ENCODE measurements at regions of chr17 and their contacts with region 1.

Region 1: DNA sequence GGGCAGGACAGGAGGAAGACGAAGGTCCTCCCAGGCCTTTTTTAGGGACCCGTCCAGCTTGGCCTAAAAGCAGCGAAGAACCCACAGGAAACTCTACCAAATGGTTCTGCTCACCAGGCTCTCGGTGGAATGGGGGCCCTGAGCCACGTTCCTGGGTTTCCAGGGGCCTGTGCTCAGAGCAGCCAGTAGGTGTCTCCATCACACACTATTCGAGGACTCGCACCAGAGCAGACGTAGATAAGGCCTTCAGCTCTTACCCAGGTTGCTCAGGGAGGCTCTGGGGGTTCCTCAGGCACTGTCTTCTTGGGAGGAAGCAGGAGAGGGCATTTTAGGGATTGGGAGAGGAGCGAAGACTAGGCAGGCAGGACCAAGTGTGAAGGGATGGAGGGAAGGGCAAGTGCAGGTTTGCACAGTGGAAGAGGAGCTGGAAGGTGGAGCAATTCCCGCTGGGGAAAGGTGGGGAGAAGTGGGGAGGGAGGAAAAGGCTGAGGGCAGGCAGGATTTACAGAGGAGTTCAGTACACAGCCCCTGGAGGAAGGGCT is 157.1 kb downstream of the RGS9 start:
- DNase-seq: peak; percentile 61
- H3K4me3 ChIP-seq: no peak overlapping the region
- H3K27ac ChIP-seq: no peak overlapping the region
- H3K4me1 ChIP-seq: peaks cover 24% of the 10 kb centered on the region
- H3K27me3 ChIP-seq: peaks cover 3 to 4% of the 10 kb centered on the region in 2 experiments
- CTCF ChIP-seq: peak; percentile 84 to 86
- POLR2A ChIP-seq: no peak

Region 2: GRCh38 chr17:65055348-65056261 is 238.6 kb before region 1 on chr17:
- CTCF ChIA-PET with region 1: no interaction called
- POLR2A ChIA-PET with region 1: no interaction called
- dilution Hi-C with region 1: no loop called
- intact Hi-C with region 1: no loop called
- DNase-seq: peak; percentile 53
- H3K4me3 ChIP-seq: peak overlapping the region; percentile 34 to 78 (median 74)
- H3K27ac ChIP-seq: peak overlapping the region; percentile 2
- H3K4me1 ChIP-seq: peaks cover 11% of the 10 kb centered on the region
- H3K27me3 ChIP-seq: no peaks in the 10 kb centered on the region
- CTCF ChIP-seq: no peak
- POLR2A ChIP-seq: no peak

Region 3: GRCh38 chr17:65278050-65278819 is 16.0 kb before region 1 on chr17:
- CTCF ChIA-PET with region 1: interaction called, 14 read pairs
- POLR2A ChIA-PET with region 1: no interaction called
- dilution Hi-C with region 1: no loop called
- intact Hi-C with region 1: loop called (anchors 1 kb)
- DNase-seq: peak; percentile 58
- H3K4me3 ChIP-seq: no peak overlapping the region
- H3K27ac ChIP-seq: no peak overlapping the region
- H3K4me1 ChIP-seq: peaks cover 1% of the 10 kb centered on the region
- H3K27me3 ChIP-seq: no peaks in the 10 kb centered on the region
- CTCF ChIP-seq: peak; percentile 79 to 80
- POLR2A ChIP-seq: no peak

Region 4: GRCh38 chr17:65312718-65313374 is 18.6 kb after region 1 on chr17:
- CTCF ChIA-PET with region 1: interaction called, 22 read pairs
- POLR2A ChIA-PET with region 1: no interaction called
- dilution Hi-C with region 1: no loop called
- intact Hi-C with region 1: no loop called
- DNase-seq: no peak
- H3K4me3 ChIP-seq: no peak overlapping the region
- H3K27ac ChIP-seq: no peak overlapping the region
- H3K4me1 ChIP-seq: no peaks in the 10 kb centered on the region
- H3K27me3 ChIP-seq: peaks cover 6 to 30% of the 10 kb centered on the region in 2 experiments
- CTCF ChIP-seq: no peak
- POLR2A ChIP-seq: no peak

Region 5: DNA sequence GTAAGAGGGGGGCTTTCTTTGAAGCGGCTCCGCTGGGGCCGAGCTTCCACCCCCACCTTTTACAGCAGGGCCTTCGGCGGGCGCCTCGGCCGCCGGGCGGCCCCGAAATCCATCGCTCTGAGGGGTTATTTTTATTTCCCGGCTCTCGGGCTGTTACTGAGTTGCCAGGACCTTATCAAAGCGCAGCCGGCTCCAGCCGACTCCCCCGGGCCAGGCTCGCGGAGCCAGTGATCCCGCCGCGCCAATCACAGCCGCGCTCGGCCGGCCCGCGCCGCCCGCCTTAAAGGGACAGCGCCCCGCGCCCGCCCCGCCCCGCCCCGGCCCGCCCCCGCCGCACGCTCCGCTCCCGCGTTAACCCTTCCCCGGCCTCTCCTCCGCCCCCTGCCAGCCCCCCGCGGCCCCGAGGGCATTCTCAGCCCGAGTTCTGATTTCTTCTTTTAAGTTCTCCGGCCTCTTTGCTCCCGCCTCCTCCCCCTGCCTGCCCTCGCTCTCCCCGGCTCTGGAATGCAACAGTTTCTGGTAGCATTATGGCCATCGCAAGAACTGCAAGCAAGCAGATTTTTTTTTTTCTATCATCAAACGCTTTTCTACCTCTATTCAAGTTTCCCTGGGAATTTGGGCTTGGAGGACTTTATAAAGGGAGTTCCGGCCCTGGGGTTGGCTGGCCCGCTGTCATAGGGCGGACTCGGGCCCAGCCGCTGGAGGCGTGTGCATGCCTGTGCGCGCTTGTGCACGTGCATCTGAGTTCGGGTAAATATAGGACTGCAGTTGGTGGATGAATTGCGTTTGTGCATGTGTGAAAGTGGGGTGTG is 267.4 kb after region 1 on chr17 and contains the start of gene AXIN2:
- CTCF ChIA-PET with region 1: interaction called, 50 read pairs
- POLR2A ChIA-PET with region 1: no interaction called
- dilution Hi-C with region 1: no loop called
- intact Hi-C with region 1: loop called (anchors 1 kb)
- DNase-seq: peak; percentile 87
- H3K4me3 ChIP-seq: peak within 1 kb of the TSS; percentile 51 to 83 (median 71)
- H3K27ac ChIP-seq: peak within 1 kb of the TSS; percentile 73
- H3K4me1 ChIP-seq: peaks cover 12% of the 10 kb centered on the region
- H3K27me3 ChIP-seq: peaks cover 4 to 5% of the 10 kb centered on the region in 2 experiments
- CTCF ChIP-seq: peak in 1 of 2 donors; percentile 15
- POLR2A ChIP-seq: no peak
- total RNA-seq, gene AXIN2: 3.0 and 3.1 TPM in 2 replicates

Region 6: GRCh38 chr17:65914784-65915350 is 620.6 kb after region 1 on chr17:
- CTCF ChIA-PET with region 1: interaction called, 5 read pairs
- POLR2A ChIA-PET with region 1: no interaction called
- dilution Hi-C with region 1: no loop called
- intact Hi-C with region 1: loop called (anchors 5 kb)
- DNase-seq: peak; percentile 29
- H3K4me3 ChIP-seq: no peak overlapping the region
- H3K27ac ChIP-seq: no peak overlapping the region
- H3K4me1 ChIP-seq: peaks cover 17% of the 10 kb centered on the region
- H3K27me3 ChIP-seq: no peaks in the 10 kb centered on the region
- CTCF ChIP-seq: no peak
- POLR2A ChIP-seq: no peak

Region 7: DNA sequence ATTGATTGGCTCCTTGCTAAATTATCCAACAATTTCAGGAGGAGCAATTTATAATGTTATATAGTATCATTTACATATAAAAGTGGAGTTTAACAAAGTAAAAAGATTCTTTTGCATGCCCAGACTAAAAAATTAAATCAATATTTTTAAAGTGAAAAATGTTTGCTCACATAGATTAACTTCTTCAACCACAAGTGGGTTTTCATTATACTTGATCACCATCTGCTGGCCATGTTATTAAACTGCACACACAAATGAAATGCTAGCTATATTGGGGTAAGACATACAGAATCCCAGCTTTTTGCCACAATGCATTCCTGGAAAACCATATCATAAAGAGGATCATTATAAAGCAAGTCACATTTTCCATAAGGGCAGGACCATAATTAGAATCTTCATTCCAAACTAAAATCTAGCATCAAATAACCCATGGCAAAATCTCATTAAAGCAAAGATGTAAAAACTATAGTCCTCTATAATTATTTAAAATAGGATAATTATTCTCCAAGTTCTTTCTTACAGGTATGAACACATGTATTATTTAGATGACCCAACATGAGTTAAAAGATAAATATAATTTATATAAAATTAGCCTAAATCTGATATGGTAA is 871.4 kb after region 1 on chr17:
- CTCF ChIA-PET with region 1: interaction called, 119 read pairs
- POLR2A ChIA-PET with region 1: interaction called, 6 read pairs
- dilution Hi-C with region 1: no loop called
- intact Hi-C with region 1: loop called (anchors 1 kb)
- DNase-seq: peak; percentile 72
- H3K4me3 ChIP-seq: no peak overlapping the region
- H3K27ac ChIP-seq: no peak overlapping the region
- H3K4me1 ChIP-seq: no peaks in the 10 kb centered on the region
- H3K27me3 ChIP-seq: no peaks in the 10 kb centered on the region
- CTCF ChIP-seq: peak; percentile 33 to 45
- POLR2A ChIP-seq: no peak

Measured in endothelial cell of umbilical vein (primary cell).